Activated B cell treated with CpG ODN at 0.5 μM for 24 hours (primary cell): ENCODE measurements at regions of chr12 and their contacts with region 1.

Region 1: GRCh38 chr12:51238510-51239334 is at the start of gene DAZAP2:
- DNase-seq: peak; percentile 89
- ATAC-seq: peak; percentile 91
- H3K4me3 Mint-ChIP-seq: peak within 1 kb of the TSS; percentile 98
- H3K27ac Mint-ChIP-seq: peak within 1 kb of the TSS; percentile 100
- H3K4me1 Mint-ChIP-seq: peaks cover 43% of the 10 kb centered on the region
- H3K27me3 Mint-ChIP-seq: no peaks in the 10 kb centered on the region
- CTCF ChIP-seq: no peak
- total RNA-seq, gene DAZAP2: 209 and 214 TPM in 2 replicates

Region 2: GRCh38 chr12:51025836-51026638 is 212.7 kb before region 1 on chr12 and contains the start of gene SLC11A2:
- CTCF ChIA-PET with region 1: no interaction called
- POLR2A ChIA-PET with region 1: interaction called, 7 read pairs
- intact Hi-C with region 1: loop called (anchors 2 kb)
- DNase-seq: peak; percentile 86
- ATAC-seq: peak; percentile 98
- H3K4me3 Mint-ChIP-seq: peak within 1 kb of the TSS; percentile 99
- H3K27ac Mint-ChIP-seq: peak within 1 kb of the TSS; percentile 93
- H3K4me1 Mint-ChIP-seq: peaks cover 42% of the 10 kb centered on the region
- H3K27me3 Mint-ChIP-seq: no peaks in the 10 kb centered on the region
- CTCF ChIP-seq: no peak
- total RNA-seq, gene SLC11A2: 32.3 and 44.6 TPM in 2 replicates

Region 3: DNA sequence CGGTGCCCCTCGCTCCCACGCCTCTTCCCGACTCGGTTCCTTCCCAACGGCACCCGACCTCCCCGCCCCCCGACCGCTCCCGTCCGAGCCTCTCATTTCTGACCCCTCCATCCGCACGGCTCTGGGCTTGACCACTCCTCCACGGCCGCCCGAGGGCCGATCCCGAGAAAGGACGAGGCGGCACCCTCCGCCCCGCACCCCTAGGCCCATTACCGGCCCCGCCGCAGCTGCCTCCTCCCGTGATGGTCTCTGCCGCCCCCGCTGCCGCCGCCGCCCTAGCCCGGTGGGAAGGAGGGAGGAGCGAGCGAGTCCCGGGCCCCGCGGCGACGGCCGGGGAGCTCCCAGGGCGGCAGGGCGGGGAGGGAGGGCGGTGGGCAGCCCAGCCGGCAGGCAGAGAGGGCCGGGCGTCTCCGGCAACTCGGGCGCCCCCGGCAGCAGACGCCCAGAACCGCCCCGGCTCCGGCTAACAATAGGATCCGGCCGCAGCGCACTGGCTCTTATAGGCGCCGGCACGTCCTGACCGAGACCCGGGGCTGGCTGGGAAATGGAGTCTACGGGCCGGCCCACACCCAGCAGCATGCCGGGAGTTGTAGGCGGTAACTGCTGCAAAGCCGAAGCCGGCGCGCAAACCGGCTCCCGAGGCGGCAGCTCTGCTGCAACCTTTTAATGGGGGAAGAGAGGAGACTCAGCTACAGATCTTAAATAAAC is 155.4 kb before region 1 on chr12 and contains the start of gene CSRNP2:
- CTCF ChIA-PET with region 1: no interaction called
- POLR2A ChIA-PET with region 1: interaction called, 15 read pairs
- intact Hi-C with region 1: loop called (anchors 1 kb)
- DNase-seq: peak; percentile 92
- ATAC-seq: peak; percentile 99
- H3K4me3 Mint-ChIP-seq: peak within 1 kb of the TSS; percentile 96
- H3K27ac Mint-ChIP-seq: peak within 1 kb of the TSS; percentile 71
- H3K4me1 Mint-ChIP-seq: peaks cover 20% of the 10 kb centered on the region
- H3K27me3 Mint-ChIP-seq: no peaks in the 10 kb centered on the region
- CTCF ChIP-seq: no peak
- total RNA-seq, gene CSRNP2: 16.9 and 17.7 TPM in 2 replicates

Region 4: GRCh38 chr12:51205350-51205749 is 33.4 kb before region 1 on chr12:
- CTCF ChIA-PET with region 1: no interaction called
- POLR2A ChIA-PET with region 1: interaction called, 10 read pairs
- intact Hi-C with region 1: no loop called
- DNase-seq: no peak
- ATAC-seq: no peak
- H3K4me3 Mint-ChIP-seq: no peak overlapping the region
- H3K27ac Mint-ChIP-seq: no peak overlapping the region
- H3K4me1 Mint-ChIP-seq: no peaks in the 10 kb centered on the region
- H3K27me3 Mint-ChIP-seq: no peaks in the 10 kb centered on the region
- CTCF ChIP-seq: no peak

Region 5: DNA sequence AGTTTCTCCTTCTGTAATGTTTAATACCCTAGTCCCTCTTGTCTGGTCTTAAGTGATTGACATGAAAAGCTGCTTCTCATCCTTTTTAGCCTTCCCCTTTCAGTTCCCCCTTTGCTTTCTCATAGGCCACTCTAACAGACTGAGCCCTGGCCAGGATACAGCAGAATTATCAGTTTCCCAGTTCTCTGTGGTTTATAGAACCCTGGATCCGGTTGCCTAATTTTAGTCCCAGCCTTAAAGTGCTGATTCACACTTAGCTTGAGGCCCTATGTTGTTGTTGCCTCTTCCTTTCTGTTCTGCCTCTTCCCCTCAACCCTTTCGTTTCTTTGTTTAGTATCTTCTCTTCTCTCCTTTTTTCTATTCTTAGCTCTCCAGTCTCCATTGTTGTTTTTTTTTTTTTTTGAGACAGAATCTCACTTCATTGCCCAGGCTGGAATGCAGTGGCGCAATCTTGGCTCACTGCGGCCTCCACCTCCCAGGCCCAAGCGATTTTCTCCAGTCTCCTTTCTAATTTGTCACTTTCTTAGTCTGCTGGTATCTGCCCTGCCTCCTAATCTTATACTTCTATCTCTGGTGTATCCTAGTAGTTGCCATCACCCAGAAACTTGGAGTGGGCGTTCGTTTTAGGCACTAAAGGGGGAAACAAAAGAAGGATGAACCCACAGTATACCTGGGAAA is 88.2 kb after region 1 on chr12:
- CTCF ChIA-PET with region 1: no interaction called
- POLR2A ChIA-PET with region 1: interaction called, 21 read pairs
- intact Hi-C with region 1: loop called (anchors 1 kb)
- DNase-seq: no peak
- ATAC-seq: peak; percentile 41
- H3K4me3 Mint-ChIP-seq: peak overlapping the region; percentile 62
- H3K27ac Mint-ChIP-seq: peak overlapping the region; percentile 72
- H3K4me1 Mint-ChIP-seq: peaks cover 81% of the 10 kb centered on the region
- H3K27me3 Mint-ChIP-seq: no peaks in the 10 kb centered on the region
- CTCF ChIP-seq: no peak